ENCODE measurements at regions of chr7 and their contacts with region 1.

Region 1: GRCh38 chr7:23570592-23571200 is 26.5 kb upstream of the CCDC126 start:
- ATAC-seq: peak; percentile 76 to 99 (median 84)
- H3K4me3 ChIP-seq: no peak overlapping the region
- H3K27ac ChIP-seq: no peak overlapping the region
- H3K4me1 ChIP-seq: no peaks in the 10 kb centered on the region

Region 2: DNA sequence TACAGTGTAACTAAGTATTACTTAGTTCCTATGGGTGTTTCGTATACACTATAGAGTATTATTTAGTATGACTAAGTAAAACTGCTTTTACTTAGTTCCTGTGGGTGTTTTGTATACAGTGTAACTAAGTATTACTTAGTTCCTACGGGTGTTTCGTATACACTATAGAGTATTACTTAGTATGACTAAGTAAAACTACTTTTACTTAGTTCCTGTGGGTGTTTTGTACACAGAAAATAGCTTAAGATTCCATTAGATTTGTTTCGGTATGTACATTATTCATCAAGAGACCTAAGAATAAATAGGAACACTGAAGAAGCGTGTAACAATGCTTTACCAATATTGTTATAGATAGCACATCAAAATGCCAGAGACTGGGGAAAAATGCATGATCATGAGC is 125.4 kb before region 1 on chr7:
- in situ Hi-C with region 1: no loop called
- ATAC-seq: peak in 3 of 8 experiments; percentile 33 to 70 (median 43)
- H3K4me3 ChIP-seq: no peak overlapping the region
- H3K27ac ChIP-seq: no peak overlapping the region
- H3K4me1 ChIP-seq: no peaks in the 10 kb centered on the region

Region 3: DNA sequence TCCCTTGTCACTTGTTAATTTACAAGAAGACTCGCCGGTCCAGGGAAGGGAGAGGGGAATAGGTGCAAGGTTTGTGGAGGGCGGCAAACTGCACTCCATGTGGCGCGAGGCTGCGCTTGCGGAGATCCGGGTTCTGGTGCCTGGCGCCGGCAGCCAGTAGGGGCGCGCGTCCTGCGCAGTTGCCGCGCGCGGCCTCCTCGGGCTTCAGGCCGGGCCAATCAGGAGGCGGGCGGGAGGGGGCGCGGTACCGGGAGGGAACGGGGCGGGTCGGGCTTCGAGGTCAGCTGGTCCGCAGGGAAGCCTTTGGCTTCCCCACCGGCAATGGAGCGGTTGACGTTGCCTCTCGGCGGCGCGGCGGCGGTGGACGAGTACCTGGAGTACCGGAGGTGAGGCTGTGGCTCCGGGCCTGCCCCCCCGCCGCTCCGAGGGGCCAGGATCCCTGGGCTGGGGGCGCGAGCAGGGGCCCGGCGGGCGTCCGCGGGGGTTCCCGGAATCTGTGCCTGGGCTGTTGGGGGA is 109.3 kb after region 1 on chr7 and contains the start of gene FAM221A:
- in situ Hi-C with region 1: loop called in 2 of 9 experiments (anchors 25 kb)
- ATAC-seq: peak; percentile 92 to 97 (median 94)
- H3K4me3 ChIP-seq: peak within 1 kb of the TSS; percentile 75 to 94 (median 85)
- H3K27ac ChIP-seq: peak within 1 kb of the TSS; percentile 36 to 63
- H3K4me1 ChIP-seq: peaks cover 5 to 12% of the 10 kb centered on the region in 2 donors
- total RNA-seq, gene FAM221A: 2.3 to 26.8 (median 18.9) TPM

Region 4: DNA sequence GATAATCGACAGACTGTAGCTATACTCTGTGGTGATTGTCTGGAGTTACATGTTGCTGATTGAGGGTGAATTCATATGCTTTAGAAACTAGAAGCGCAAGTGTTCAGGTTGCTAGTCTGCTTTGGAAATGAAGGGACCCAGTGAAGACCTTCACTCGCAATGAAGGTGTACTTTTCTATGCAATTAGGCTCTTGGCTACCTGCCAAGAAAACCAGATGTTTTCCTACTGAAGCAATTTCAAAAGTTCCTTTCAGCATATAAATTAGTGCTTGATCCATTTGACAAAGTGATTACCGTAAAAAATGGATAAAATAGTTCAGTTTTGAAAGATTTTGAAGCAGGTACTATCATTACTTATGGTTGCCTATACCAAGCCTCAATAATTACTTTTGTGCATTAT is 129.4 kb after region 1 on chr7:
- in situ Hi-C with region 1: loop called in 7 of 9 experiments (anchors 10 to 25 kb)
- ATAC-seq: no peak
- H3K4me3 ChIP-seq: no peak overlapping the region
- H3K27ac ChIP-seq: no peak overlapping the region
- H3K4me1 ChIP-seq: no peaks in the 10 kb centered on the region

Region 5: DNA sequence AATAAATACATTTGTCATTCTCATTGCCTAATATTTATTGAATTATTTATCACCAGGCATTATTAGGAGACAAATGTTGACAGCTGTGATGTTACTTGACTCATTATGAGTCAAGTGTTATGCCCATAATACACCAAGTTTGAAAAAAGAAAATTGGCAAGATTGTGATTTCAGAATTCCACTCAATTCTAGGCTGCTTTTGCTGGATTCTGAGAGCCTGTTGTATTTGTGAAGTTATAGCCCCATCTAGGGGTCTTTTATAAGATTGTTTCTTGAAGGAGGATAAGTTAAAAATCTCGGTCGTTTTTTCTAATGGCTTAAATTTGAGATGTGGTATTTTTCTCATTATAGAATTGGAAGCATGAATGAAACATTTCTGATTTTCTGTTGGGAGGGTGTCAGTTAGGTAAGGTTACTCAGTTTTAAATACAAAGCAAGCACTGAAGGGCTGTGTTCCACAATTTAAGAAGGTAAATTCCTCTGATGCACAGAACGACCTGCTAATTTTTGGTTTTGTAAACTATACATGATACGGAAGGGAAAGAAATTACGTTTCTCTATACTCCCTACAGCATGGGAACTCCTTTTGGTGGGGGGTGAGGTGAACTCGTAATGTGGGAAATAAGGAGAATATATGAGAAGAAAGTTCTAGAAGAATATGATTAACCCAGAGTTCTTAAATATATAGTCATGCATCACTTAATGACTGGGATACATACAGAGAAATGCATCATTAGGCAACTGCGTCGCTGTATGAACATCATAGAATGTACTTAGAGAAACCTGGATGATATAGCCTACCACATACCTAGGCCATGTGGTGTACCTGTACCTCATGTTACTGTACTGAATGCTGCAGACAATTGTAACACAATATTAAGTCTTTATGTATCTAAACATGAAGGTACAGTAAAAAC is 141.9 kb after region 1 on chr7:
- in situ Hi-C with region 1: loop called in 5 of 9 experiments (anchors 10 to 25 kb)
- ATAC-seq: peak in 6 of 8 experiments; percentile 7 to 43 (median 30)
- H3K4me3 ChIP-seq: no peak overlapping the region
- H3K27ac ChIP-seq: no peak overlapping the region
- H3K4me1 ChIP-seq: no peaks in the 10 kb centered on the region

Region 6: DNA sequence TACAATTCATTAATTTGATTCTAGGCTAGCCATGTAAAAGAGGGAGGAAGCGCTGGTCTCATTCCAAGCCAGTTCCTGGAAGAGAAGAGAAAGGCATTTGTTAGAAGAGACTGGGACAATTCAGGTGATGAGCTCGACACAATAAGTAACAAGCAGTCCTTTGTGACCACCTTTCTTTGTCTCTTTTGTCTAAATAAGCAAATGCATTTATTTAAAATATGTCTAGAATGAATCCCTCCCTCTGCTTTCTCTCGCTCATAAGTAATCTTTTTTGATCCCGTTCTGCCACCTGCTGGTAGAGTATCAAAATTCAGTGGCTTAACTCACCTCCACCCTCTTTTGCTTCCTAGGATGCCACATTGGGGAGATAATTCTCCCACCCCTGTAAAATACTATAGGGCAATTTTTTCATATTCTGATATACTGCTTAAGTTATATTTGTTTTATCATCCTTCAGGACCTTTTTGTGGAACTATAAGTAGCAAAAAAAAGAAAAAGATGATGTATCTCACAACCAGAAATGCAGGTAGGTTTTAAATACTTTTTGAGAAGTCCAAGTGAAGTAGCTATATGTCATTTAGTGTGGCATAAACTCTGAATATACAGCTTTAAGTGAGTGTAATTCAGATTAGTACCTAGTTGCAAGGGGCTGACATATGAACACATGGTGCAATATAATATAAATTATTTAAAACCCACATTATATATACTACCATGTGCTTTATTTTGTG is 1095.0 kb after region 1 on chr7:
- in situ Hi-C with region 1: loop called in 1 of 9 experiments (anchors 25 kb)
- ATAC-seq: peak in 7 of 8 experiments; percentile 53 to 81 (median 67)
- H3K4me3 ChIP-seq: no peak overlapping the region
- H3K27ac ChIP-seq: no peak overlapping the region
- H3K4me1 ChIP-seq: peaks cover 0 to 2% of the 10 kb centered on the region in 2 donors

Region 7: GRCh38 chr7:25093268-25093826 is 1522.7 kb after region 1 on chr7:
- in situ Hi-C with region 1: loop called in 1 of 9 experiments (anchors 25 kb)
- ATAC-seq: peak in 6 of 8 experiments; percentile 25 to 87 (median 68)
- H3K4me3 ChIP-seq: no peak overlapping the region
- H3K27ac ChIP-seq: no peak overlapping the region
- H3K4me1 ChIP-seq: peaks cover 16 to 21% of the 10 kb centered on the region in 2 donors